Common myeloid progenitor, CD34-positive (primary cell): ENCODE measurements at regions of chr9 and their contacts with region 1.

Region 1: DNA sequence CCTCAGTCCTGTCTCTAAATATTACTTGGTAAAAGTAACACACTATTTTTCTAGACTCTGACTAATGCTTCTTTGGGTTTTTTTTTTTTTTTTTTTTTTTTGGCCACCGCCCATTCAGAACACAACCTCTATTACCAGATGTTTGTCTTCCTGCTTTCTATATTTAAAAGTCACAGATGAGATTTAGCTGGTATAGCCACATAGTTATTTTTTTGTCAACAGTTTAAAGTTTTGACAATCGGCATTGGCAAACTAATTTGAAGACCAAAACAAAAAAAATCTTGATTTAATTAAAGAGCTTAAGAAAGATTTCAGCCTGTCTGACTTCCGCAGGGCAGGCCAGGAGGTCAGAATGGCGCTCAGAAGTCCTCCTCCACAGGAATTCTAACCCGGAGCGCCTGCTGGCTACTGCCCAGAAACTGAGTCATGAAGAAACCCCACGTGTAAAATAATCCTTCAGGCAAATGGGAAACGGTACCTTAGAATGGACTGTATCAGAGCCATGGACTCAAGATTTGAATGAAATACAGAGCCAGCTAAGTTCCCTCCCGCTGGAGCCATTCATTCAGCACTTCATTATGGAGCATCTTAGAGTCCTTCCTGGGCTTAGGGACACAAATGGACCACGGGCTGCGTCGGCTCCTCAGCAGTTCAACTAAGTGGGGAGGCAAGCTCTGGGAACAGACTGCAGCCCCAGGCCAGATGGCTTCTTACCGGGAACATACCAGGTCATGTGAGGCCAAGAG is 55.6 kb downstream of the PTPDC1 start:
- DNase-seq: peak in 2 of 3 donors; percentile 31 to 45
- H3K4me3 ChIP-seq: no peak overlapping the region
- H3K27ac ChIP-seq: peak overlapping the region in 1 of 2 experiments; percentile 12
- H3K4me1 ChIP-seq: peaks cover 0 to 28% (median 6%) of the 10 kb centered on the region in 4 experiments
- H3K27me3 ChIP-seq: no peaks in the 10 kb centered on the region

Region 2: GRCh38 chr9:94160594-94161501 is 21.0 kb after region 1 on chr9:
- CTCF ChIA-PET with region 1: interaction called, 4 read pairs
- POLR2A ChIA-PET with region 1: interaction called, 12 read pairs
- DNase-seq: no peak
- H3K4me3 ChIP-seq: no peak overlapping the region
- H3K27ac ChIP-seq: no peak overlapping the region
- H3K4me1 ChIP-seq: peaks cover 14 to 57% (median 44%) of the 10 kb centered on the region in 4 experiments
- H3K27me3 ChIP-seq: no peaks in the 10 kb centered on the region

Region 3: GRCh38 chr9:94188246-94188645 is 48.4 kb after region 1 on chr9:
- CTCF ChIA-PET with region 1: no interaction called
- POLR2A ChIA-PET with region 1: no interaction called
- DNase-seq: peak in 1 of 3 donors; percentile 19
- H3K4me3 ChIP-seq: no peak overlapping the region
- H3K27ac ChIP-seq: no peak overlapping the region
- H3K4me1 ChIP-seq: no peaks in the 10 kb centered on the region
- H3K27me3 ChIP-seq: no peaks in the 10 kb centered on the region